IMR-90 (cell line): ENCODE measurements at regions of chr1 and their contacts with region 1.

Region 1: DNA sequence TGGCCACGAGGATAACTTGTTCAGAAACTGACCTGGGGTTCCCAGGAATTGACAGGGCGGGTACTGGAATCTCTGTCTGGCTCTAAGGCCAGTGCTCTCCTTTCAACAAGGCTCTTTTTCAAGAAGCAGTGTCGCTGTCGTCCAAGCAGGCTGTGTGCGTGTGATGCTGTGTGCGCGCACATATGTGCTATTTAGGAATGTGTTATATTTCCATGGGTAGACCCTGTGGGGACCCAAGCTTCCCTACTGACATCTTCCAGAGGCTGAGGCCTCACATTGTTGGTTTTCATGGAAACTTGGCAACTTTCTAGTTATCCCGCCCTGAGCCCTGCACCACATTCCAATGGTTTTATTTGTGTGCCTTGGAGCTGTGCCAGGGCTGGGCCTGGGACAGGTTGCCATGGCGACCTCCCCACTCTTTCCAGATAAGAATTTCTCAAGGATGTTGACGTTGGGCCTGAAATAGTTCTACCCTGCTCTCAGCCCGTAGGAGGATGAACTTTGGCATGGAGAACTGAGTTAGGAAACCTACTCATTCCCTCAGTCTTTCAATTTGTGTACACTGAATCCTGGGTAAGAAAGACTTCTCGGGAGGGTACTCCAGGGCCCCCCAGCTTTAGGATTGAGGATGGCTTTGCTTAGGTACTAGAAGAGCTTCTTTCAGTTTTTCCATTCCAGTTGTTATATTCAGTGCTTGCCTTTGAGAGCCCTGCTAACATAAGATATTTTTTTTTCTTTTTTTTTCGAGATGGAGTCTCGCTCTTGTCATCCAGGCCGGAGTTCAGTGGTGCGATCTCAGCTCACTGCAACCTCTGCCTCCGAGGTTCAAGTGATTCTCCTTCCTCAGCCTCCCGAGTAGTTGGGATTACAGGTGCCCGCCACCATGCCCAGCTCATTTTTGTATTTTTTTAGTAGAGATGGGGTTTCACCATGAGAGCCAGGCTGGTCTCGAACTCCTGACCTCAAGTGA is 38.8 kb upstream of the SRSF10 start:
- DNase-seq: peak; percentile 99
- ATAC-seq: peak; percentile 84
- H3K4me3 ChIP-seq: no peak overlapping the region
- H3K27ac ChIP-seq: peak overlapping the region; percentile 81
- H3K4me1 ChIP-seq: peaks cover 26% of the 10 kb centered on the region
- H3K27me3 ChIP-seq: no peaks in the 10 kb centered on the region
- CTCF ChIP-seq: no peak
- POLR2A ChIP-seq: peak; percentile 59; the same call in 1 of the 2 replicates
- RAD21 ChIP-seq: no peak

Region 2: GRCh38 chr1:23979878-23980724 is 38.8 kb before region 1 on chr1 and contains the start of gene SRSF10:
- CTCF ChIA-PET with region 1: no interaction called
- POLR2A ChIA-PET with region 1: no interaction called
- dilution Hi-C with region 1: no loop called
- in situ Hi-C with region 1: loop called (anchors 5 kb)
- intact Hi-C with region 1: loop called (anchors 2 kb)
- DNase-seq: peak; percentile 99
- ATAC-seq: peak; percentile 99
- H3K4me3 ChIP-seq: peak within 1 kb of the TSS; percentile 86
- H3K27ac ChIP-seq: peak within 1 kb of the TSS; percentile 98
- H3K4me1 ChIP-seq: peaks cover 7% of the 10 kb centered on the region
- H3K27me3 ChIP-seq: no peaks in the 10 kb centered on the region
- CTCF ChIP-seq: peak; percentile 46
- POLR2A ChIP-seq: peak; percentile 98
- RAD21 ChIP-seq: 0 out of 2 replicates have a peak, but pooled peaks have one; percentile 15
- total RNA-seq, gene SRSF10: 110 and 189 TPM in 2 replicates

Region 3: GRCh38 chr1:24186993-24187805 is 168.3 kb after region 1 on chr1 and contains the start of gene IFNLR1:
- CTCF ChIA-PET with region 1: no interaction called
- POLR2A ChIA-PET with region 1: no interaction called
- dilution Hi-C with region 1: no loop called
- in situ Hi-C with region 1: no loop called
- intact Hi-C with region 1: no loop called
- DNase-seq: no peak
- ATAC-seq: peak; percentile 55
- H3K4me3 ChIP-seq: peak within 1 kb of the TSS; percentile 31
- H3K27ac ChIP-seq: no peak within 1 kb of the TSS
- H3K4me1 ChIP-seq: peaks cover 2% of the 10 kb centered on the region
- H3K27me3 ChIP-seq: peaks cover 36% of the 10 kb centered on the region
- CTCF ChIP-seq: no peak
- POLR2A ChIP-seq: no peak
- RAD21 ChIP-seq: no peak
- total RNA-seq, gene IFNLR1: not detected in 2 replicates